ENCODE measurements at regions of chr21 and their contacts with region 1.

Region 1: DNA sequence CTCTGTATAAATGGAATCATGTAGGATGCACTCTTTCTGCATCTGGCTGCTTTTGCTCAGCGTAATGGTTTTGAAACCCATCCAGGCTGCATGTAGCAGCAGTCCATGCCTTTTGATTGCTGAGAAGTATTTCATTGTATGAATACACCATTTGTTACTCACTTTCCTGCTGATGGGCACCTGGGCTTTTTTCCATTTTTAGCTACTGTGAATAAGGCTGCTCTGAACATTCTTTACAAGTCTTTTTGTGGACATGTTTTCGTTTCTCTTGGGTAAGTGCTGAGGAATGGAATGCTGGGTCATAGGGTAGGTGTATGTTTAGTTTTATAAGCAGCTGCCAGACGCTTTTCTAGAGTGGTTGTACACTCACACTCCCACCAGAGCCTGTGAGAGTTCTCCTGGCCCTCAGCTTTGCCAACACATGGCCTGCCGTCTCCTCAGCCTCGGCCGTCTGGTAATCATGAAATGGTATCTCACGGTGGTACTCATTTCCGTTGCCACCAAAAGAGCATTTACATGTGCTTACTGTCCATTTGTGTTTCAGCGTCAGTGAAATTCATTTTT is 22.7 kb downstream of the SLX9 start:
- DNase-seq: peak; percentile 100
- ATAC-seq: peak; percentile 91
- H3K4me3 ChIP-seq: no peak overlapping the region
- H3K27ac ChIP-seq: peak overlapping the region; percentile 81
- H3K4me1 ChIP-seq: peaks cover 24% of the 10 kb centered on the region
- H3K27me3 ChIP-seq: no peaks in the 10 kb centered on the region
- CTCF ChIP-seq: no peak
- POLR2A ChIP-seq: peak; percentile 65
- RAD21 ChIP-seq: no peak; the same call in 1 of the 2 replicates

Region 2: GRCh38 chr21:44637018-44637850 is 325.3 kb before region 1 on chr21 and contains the start of gene KRTAP10-10:
- CTCF ChIA-PET with region 1: no interaction called
- POLR2A ChIA-PET with region 1: no interaction called
- dilution Hi-C with region 1: no loop called
- in situ Hi-C with region 1: no loop called
- intact Hi-C with region 1: no loop called
- DNase-seq: no peak
- ATAC-seq: no peak
- H3K4me3 ChIP-seq: no peak within 1 kb of the TSS
- H3K27ac ChIP-seq: no peak within 1 kb of the TSS
- H3K4me1 ChIP-seq: no peaks in the 10 kb centered on the region
- H3K27me3 ChIP-seq: no peaks in the 10 kb centered on the region; the same call in 1 of the 2 replicates
- CTCF ChIP-seq: no peak
- POLR2A ChIP-seq: no peak
- RAD21 ChIP-seq: no peak
- total RNA-seq, gene KRTAP10-10: not detected in 2 replicates

Region 3: GRCh38 chr21:45050786-45051489 is 88.5 kb after region 1 on chr21:
- CTCF ChIA-PET with region 1: no interaction called
- POLR2A ChIA-PET with region 1: no interaction called
- dilution Hi-C with region 1: no loop called
- in situ Hi-C with region 1: no loop called
- intact Hi-C with region 1: loop called (anchors 1 kb)
- DNase-seq: peak; percentile 100
- ATAC-seq: peak; percentile 82
- H3K4me3 ChIP-seq: no peak overlapping the region
- H3K27ac ChIP-seq: peak overlapping the region; percentile 99
- H3K4me1 ChIP-seq: peaks cover 38% of the 10 kb centered on the region
- H3K27me3 ChIP-seq: no peaks in the 10 kb centered on the region
- CTCF ChIP-seq: no peak
- POLR2A ChIP-seq: 0 out of 2 replicates have a peak, but pooled peaks have one; percentile 3
- RAD21 ChIP-seq: no peak

Region 4: DNA sequence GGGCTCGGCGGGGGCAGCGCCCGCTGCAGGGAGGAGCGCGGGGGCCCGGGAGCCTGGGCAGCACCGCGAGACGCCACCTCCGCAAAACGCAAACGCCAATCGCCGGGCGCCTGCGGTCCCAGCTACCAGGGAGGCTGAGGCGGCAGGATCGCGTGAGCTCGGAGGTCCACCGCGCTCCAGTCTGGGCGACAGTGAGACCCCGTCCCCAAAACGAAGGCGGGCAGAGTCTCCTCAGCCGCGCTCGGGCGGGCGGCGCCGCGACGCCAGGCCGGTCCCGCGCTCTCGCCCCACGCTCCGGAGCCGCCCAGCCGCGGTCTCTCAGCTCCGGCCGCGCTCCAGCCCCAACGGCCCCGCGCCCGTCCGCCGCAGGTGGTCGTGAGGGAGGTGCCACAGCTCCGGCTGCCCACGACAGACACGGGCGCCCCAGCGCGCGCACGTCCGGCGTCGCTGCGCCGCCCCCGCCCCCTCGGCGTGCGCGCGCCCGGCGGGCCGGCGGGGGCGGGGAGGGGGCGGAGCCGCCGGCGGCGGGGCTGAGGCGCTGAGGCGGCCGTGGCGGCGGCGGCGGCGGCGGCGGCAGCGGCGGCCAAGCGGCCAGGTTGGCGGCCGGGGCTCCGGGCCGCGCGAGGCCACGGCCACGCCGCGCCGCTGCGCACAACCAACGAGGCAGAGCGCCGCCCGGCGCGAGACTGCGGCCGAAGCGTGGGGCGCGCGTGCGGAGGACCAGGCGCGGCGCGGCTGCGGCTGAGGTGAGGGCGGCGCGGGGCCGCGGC is 111.7 kb after region 1 on chr21 and contains the start of gene ADARB1:
- CTCF ChIA-PET with region 1: no interaction called
- POLR2A ChIA-PET with region 1: no interaction called
- dilution Hi-C with region 1: no loop called
- in situ Hi-C with region 1: no loop called
- intact Hi-C with region 1: loop called (anchors 2 kb)
- DNase-seq: peak; percentile 56
- ATAC-seq: peak; percentile 78
- H3K4me3 ChIP-seq: peak within 1 kb of the TSS; percentile 100
- H3K27ac ChIP-seq: peak within 1 kb of the TSS; percentile 99
- H3K4me1 ChIP-seq: peaks cover 17% of the 10 kb centered on the region
- H3K27me3 ChIP-seq: no peaks in the 10 kb centered on the region
- CTCF ChIP-seq: no peak
- POLR2A ChIP-seq: peak; percentile 86
- RAD21 ChIP-seq: no peak
- total RNA-seq, gene ADARB1: 39.7 and 39.8 TPM in 2 replicates

Region 5: DNA sequence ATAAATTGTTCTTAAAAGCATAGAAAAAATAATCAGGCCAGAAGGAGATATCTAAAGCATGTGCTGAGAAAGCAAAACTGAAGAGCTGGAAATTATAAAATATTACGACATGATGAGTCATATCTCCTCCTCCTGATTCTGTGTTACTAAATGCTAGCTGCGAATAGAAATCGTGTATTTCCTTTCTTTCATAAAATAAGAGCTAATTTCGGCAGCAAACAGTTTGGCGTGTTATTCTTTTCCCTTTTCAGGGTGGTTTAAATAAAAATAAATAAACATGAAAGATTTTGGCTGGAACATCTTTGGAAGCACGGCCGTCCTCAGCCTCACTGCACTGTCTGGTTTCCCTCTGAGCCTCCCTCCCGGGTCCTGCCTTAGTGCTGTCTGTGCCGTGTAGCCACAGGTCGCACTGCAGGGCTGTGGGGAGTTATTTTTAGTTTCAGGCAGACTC is 167.9 kb after region 1 on chr21:
- CTCF ChIA-PET with region 1: interaction called, 16 read pairs
- POLR2A ChIA-PET with region 1: no interaction called
- dilution Hi-C with region 1: no loop called
- in situ Hi-C with region 1: no loop called
- intact Hi-C with region 1: loop called (anchors 5 kb)
- DNase-seq: peak; percentile 84
- ATAC-seq: peak; percentile 82
- H3K4me3 ChIP-seq: peak overlapping the region; percentile 31
- H3K27ac ChIP-seq: peak overlapping the region; percentile 56
- H3K4me1 ChIP-seq: peaks cover 24% of the 10 kb centered on the region
- H3K27me3 ChIP-seq: no peaks in the 10 kb centered on the region
- CTCF ChIP-seq: no peak
- POLR2A ChIP-seq: no peak
- RAD21 ChIP-seq: no peak

Region 6: GRCh38 chr21:45680215-45680614 is 717.7 kb after region 1 on chr21:
- CTCF ChIA-PET with region 1: no interaction called
- POLR2A ChIA-PET with region 1: no interaction called
- dilution Hi-C with region 1: no loop called
- in situ Hi-C with region 1: no loop called
- intact Hi-C with region 1: no loop called
- DNase-seq: no peak
- ATAC-seq: no peak
- H3K4me3 ChIP-seq: no peak overlapping the region
- H3K27ac ChIP-seq: no peak overlapping the region
- H3K4me1 ChIP-seq: no peaks in the 10 kb centered on the region
- H3K27me3 ChIP-seq: no peaks in the 10 kb centered on the region
- CTCF ChIP-seq: no peak
- POLR2A ChIP-seq: no peak
- RAD21 ChIP-seq: no peak

Region 7: GRCh38 chr21:46295996-46296752 is 1333.7 kb after region 1 on chr21:
- CTCF ChIA-PET with region 1: no interaction called
- POLR2A ChIA-PET with region 1: no interaction called
- dilution Hi-C with region 1: no loop called
- in situ Hi-C with region 1: no loop called
- intact Hi-C with region 1: no loop called
- DNase-seq: peak; percentile 32
- ATAC-seq: no peak
- H3K4me3 ChIP-seq: no peak overlapping the region
- H3K27ac ChIP-seq: no peak overlapping the region
- H3K4me1 ChIP-seq: peaks cover 11% of the 10 kb centered on the region
- H3K27me3 ChIP-seq: no peaks in the 10 kb centered on the region
- CTCF ChIP-seq: no peak
- POLR2A ChIP-seq: no peak
- RAD21 ChIP-seq: no peak